ENCODE measurements at regions of chr11 and their contacts with region 1.

Region 1: GRCh38 chr11:3939211-3939610 is 83.7 kb downstream of the STIM1 start:
- DNase-seq: no peak
- ATAC-seq: no peak
- H3K4me3 ChIP-seq: no peak overlapping the region
- H3K4me3 Mint-ChIP-seq: peak overlapping the region in 1 of 10 donors; percentile 26
- H3K27ac ChIP-seq: no peak overlapping the region
- H3K27ac Mint-ChIP-seq: peak overlapping the region in 8 of 9 donors; percentile 44 to 95 (median 76)
- H3K4me1 ChIP-seq: peaks cover 26 to 49% of the 10 kb centered on the region in 2 donors
- H3K4me1 Mint-ChIP-seq: peaks cover 56 to 92% (median 84%) of the 10 kb centered on the region in 7 donors
- H3K27me3 ChIP-seq: no peaks in the 10 kb centered on the region
- H3K27me3 Mint-ChIP-seq: no peaks in the 10 kb centered on the region

Region 2: DNA sequence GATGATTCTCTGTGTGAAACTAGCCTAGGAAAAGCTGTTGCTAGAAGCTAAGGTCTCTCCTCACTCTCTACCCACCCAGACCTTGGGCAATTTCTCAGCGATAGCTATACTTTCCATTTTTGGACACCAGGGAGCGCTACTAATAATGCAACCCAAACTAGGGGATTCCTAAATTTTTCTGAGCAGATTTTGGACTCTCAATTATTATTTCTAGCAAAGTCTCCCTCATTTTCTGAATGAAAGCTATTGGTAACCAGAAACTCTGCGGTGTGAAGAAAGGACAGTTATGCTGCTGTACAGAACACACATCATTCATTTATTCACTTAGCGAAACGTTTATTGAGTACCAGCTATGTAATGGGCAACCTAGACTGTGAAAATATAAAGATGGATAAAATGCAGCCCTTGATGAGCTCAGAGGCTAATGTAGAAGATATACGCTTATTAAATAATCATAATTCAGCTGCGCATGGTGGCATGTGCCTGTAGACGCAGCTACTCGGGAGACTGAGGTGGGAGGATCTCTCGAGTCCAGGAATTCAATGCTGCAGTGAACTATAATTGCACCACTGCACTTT is 89.8 kb before region 1 on chr11:
- CTCF ChIA-PET with region 1: interaction called, 30 read pairs
- POLR2A ChIA-PET with region 1: interaction called, 86 read pairs
- intact Hi-C with region 1: loop called in 1 of 2 experiments (anchors 1 kb)
- DNase-seq: peak in 7 of 9 donors; percentile 45 to 72 (median 62)
- ATAC-seq: peak; percentile 82
- H3K4me3 ChIP-seq: no peak overlapping the region
- H3K4me3 Mint-ChIP-seq: no peak overlapping the region
- H3K27ac ChIP-seq: no peak overlapping the region
- H3K27ac Mint-ChIP-seq: peak overlapping the region in 8 of 9 donors; percentile 7 to 80 (median 62)
- H3K4me1 ChIP-seq: peaks cover 20 to 33% of the 10 kb centered on the region in 2 donors
- H3K4me1 Mint-ChIP-seq: peaks cover 28 to 61% (median 42%) of the 10 kb centered on the region in 7 donors
- H3K27me3 ChIP-seq: no peaks in the 10 kb centered on the region
- H3K27me3 Mint-ChIP-seq: no peaks in the 10 kb centered on the region

Region 3: DNA sequence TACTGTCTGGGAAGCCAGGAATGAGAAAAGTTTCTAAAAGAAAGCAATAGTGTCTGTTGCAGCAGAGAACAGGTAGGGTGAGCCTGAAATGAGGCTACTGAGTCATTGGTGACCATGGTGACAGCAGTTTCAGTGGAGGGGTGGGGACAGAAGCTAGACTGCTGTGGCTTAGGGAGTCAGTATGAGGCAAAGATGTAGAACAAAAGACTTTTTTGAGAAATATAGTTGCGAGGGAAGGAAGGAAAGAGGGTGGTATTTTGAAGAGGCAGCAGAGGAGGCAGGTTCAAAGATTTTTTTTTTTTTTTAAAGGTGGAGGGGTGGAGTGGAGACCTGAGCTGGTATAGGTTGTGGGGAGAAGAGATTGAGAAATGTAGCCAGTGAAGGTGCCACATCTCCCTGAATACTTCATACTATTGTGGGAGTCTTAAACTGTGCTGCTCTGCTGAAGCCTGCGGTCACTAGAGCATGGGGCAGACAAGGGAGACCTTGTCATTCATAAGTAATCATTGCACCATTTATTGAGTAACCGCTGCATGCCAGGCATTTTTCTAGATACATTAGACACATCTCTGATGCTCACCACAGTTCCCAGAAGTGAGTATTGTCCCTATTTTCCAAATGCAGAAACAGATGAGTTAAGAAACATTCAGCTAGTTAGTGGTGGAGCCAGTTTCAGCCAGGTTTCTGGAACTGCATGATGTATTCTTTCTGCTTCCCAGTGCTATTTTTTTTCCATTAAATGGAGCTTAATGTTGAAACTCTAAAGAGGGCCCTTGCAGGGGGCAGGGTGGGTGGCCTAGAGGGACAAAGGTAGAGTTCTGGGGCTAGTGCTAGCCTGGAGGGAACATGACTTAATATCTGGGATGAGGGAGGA is 33.9 kb before region 1 on chr11:
- CTCF ChIA-PET with region 1: interaction called, 3 read pairs
- POLR2A ChIA-PET with region 1: no interaction called
- intact Hi-C with region 1: loop called (anchors 2 to 5 kb)
- DNase-seq: peak in 8 of 9 donors; percentile 45 to 80 (median 72)
- ATAC-seq: peak; percentile 92
- H3K4me3 ChIP-seq: no peak overlapping the region
- H3K4me3 Mint-ChIP-seq: peak overlapping the region; percentile 9 to 72 (median 54)
- H3K27ac ChIP-seq: peak overlapping the region; percentile 59
- H3K27ac Mint-ChIP-seq: peak overlapping the region; percentile 64 to 91 (median 81)
- H3K4me1 ChIP-seq: peaks cover 41 to 57% of the 10 kb centered on the region in 2 donors
- H3K4me1 Mint-ChIP-seq: peaks cover 66 to 93% (median 84%) of the 10 kb centered on the region in 7 donors
- H3K27me3 ChIP-seq: no peaks in the 10 kb centered on the region
- H3K27me3 Mint-ChIP-seq: no peaks in the 10 kb centered on the region

Region 4: GRCh38 chr11:3927133-3927796 is 11.9 kb before region 1 on chr11:
- CTCF ChIA-PET with region 1: interaction called, 4 read pairs
- POLR2A ChIA-PET with region 1: interaction called, 14 read pairs
- intact Hi-C with region 1: loop called in 1 of 2 experiments (anchors 1 kb)
- DNase-seq: no peak
- ATAC-seq: no peak
- H3K4me3 ChIP-seq: no peak overlapping the region
- H3K4me3 Mint-ChIP-seq: no peak overlapping the region
- H3K27ac ChIP-seq: no peak overlapping the region
- H3K27ac Mint-ChIP-seq: peak overlapping the region in 7 of 9 donors; percentile 10 to 86 (median 52)
- H3K4me1 ChIP-seq: peaks cover 0 to 4% of the 10 kb centered on the region in 2 donors
- H3K4me1 Mint-ChIP-seq: peaks cover 23 to 61% (median 58%) of the 10 kb centered on the region in 7 donors
- H3K27me3 ChIP-seq: no peaks in the 10 kb centered on the region
- H3K27me3 Mint-ChIP-seq: no peaks in the 10 kb centered on the region

Region 5: DNA sequence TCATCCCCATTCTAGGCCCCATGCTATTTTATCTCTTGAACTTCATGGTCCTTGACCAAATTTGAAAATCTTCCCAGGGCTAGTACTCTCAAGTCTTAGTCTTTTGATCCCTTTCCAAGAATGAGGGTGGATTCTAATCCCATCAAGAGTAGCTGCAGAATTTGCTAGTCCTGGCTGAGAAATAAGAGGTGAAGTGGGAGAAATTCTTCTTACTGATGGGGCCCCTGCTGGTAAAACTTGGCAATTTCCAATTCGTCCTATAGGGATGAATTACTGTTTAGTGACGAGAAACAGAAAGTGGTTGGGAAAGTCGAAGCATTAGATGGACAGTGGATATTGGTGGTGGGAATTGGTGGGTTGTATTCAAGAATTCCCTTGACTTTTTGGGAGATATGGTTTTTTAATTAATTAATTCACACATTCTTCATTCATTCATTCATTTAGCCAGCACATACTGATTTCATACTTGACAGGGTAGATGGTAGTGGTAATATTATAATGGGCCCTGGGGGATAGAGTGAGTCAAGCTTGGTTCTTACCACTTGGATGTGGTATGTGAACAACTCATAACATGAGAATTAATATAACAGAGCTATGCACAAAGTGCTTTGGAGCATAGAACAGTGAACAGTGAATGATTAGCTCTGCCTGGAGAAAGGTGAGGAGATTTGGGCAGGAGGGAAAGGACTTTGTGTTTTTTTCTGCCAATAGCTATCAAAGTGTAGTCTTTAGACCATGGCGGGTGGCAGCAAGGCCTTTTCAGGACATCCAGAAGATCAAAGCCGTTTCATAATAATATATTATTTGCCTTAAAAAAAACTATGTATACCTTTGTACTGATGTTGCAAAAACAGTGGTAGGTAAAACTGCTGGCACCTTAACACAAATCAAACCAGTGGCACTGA is 20.1 kb after region 1 on chr11:
- CTCF ChIA-PET with region 1: no interaction called
- POLR2A ChIA-PET with region 1: interaction called, 4 read pairs
- intact Hi-C with region 1: loop called in 1 of 2 experiments (anchors 2 kb)
- DNase-seq: no peak
- ATAC-seq: no peak
- H3K4me3 ChIP-seq: no peak overlapping the region
- H3K4me3 Mint-ChIP-seq: peak overlapping the region in 5 of 10 donors; percentile 7 to 34 (median 26)
- H3K27ac ChIP-seq: no peak overlapping the region
- H3K27ac Mint-ChIP-seq: peak overlapping the region in 4 of 9 donors; percentile 19 to 63 (median 52)
- H3K4me1 ChIP-seq: peaks cover 14 to 35% of the 10 kb centered on the region in 2 donors
- H3K4me1 Mint-ChIP-seq: peaks cover 58 to 93% (median 90%) of the 10 kb centered on the region in 7 donors
- H3K27me3 ChIP-seq: no peaks in the 10 kb centered on the region
- H3K27me3 Mint-ChIP-seq: no peaks in the 10 kb centered on the region

Region 6: GRCh38 chr11:3971756-3972404 is 32.7 kb after region 1 on chr11:
- CTCF ChIA-PET with region 1: interaction called, 3 read pairs
- POLR2A ChIA-PET with region 1: interaction called, 5 read pairs
- intact Hi-C with region 1: loop called in 1 of 2 experiments (anchors 1 kb)
- DNase-seq: no peak
- ATAC-seq: peak; percentile 41
- H3K4me3 ChIP-seq: no peak overlapping the region
- H3K4me3 Mint-ChIP-seq: peak overlapping the region in 1 of 10 donors; percentile 5
- H3K27ac ChIP-seq: no peak overlapping the region
- H3K27ac Mint-ChIP-seq: peak overlapping the region in 6 of 9 donors; percentile 39 to 88 (median 53)
- H3K4me1 ChIP-seq: peaks cover 10 to 28% of the 10 kb centered on the region in 2 donors
- H3K4me1 Mint-ChIP-seq: peaks cover 35 to 89% (median 81%) of the 10 kb centered on the region in 7 donors
- H3K27me3 ChIP-seq: no peaks in the 10 kb centered on the region
- H3K27me3 Mint-ChIP-seq: no peaks in the 10 kb centered on the region

Measured in naive thymus-derived CD4-positive, alpha-beta T cell (primary cell).